A673 (cell line): ENCODE measurements at regions of chr20 and their contacts with region 1.

Region 1: DNA sequence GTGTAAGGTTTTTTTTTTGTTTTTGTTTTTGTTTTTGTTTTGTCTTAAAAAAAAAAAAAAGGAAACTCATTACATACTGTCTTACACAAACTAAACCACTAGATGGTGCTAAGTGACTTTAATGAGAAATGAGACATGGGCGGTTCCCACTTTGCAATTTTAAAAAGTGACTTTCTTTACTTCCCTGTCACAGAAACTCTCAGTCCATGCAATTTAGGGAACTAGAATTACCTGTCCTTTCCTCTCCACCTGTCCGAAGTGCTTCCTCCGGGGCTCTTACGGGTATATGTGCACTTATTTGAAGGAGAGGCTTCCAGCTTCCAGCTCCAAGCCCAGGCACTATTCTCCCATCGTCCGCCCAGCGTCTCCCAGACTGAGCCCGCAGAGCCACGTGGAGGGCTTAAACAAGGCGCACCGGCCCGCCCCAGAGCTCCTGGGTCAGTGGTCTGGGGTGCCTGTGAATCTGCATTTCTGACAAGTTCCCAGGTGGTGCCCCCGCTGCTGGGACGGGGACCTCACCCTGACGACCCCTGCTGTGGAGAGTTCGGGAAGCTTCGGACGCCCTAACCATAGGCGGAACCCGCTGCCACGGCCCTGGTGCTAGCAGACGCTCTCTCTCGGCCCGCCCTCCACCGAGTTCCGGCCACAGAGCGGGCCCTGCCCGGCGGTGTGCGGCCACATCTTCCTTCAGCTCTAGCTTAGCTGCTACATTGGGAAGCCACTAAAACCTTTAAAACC is 26.1 kb downstream of the BFSP1 start:
- DNase-seq: peak; percentile 74
- H3K4me3 ChIP-seq: peak overlapping the region; percentile 32
- H3K27ac ChIP-seq: peak overlapping the region; percentile 4
- H3K4me1 ChIP-seq: peaks cover 12% of the 10 kb centered on the region
- H3K27me3 ChIP-seq: no peaks in the 10 kb centered on the region
- CTCF ChIP-seq: peak; percentile 79

Region 2: GRCh38 chr20:17530716-17531664 is 25.9 kb after region 1 on chr20 and contains the start of gene BFSP1:
- CTCF ChIA-PET with region 1: no interaction called
- POLR2A ChIA-PET with region 1: no interaction called
- intact Hi-C with region 1: loop called (anchors 2 kb)
- DNase-seq: peak; percentile 79
- H3K4me3 ChIP-seq: peak within 1 kb of the TSS; percentile 57
- H3K27ac ChIP-seq: peak within 1 kb of the TSS; percentile 88
- H3K4me1 ChIP-seq: peaks cover 23% of the 10 kb centered on the region
- H3K27me3 ChIP-seq: no peaks in the 10 kb centered on the region
- CTCF ChIP-seq: no peak
- total RNA-seq, gene BFSP1: 6.1 and 7.4 TPM in 2 replicates

Region 3: DNA sequence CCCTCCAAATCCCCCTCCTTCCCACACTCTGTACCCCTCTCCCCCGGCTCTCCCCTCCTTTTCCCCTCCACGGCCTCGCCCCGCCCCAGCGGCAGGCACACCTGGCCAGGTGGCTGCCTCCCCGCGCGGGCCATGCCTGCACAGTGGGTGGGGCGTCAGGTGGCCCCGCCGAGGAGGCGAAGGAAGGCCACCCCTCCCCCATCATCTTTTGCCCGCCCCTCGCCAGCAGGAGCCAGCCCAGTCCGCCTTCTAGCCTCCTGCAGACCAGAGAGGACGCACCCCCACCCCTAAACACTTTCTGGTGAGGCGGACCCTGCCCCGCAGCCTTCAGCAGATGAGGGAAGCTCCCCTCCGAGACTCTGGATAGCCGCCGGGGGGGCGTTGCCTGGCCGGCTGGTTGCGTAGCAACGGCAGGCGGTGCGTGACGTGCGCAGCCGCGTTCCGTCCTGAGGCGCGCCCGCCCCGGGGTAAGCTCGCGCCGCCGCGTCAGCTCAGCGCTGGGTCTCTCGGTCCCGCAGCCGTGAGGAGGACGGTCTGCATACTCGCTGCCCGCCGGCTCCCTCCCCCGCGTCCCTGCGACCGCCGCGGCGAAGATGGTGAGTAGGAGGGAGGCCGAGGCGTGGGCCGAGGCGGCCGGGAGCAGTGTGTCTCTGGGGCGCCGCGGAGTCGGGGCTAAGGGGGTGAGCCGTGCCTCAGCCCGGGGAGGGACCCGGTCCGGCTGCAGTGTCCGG is 64.7 kb after region 1 on chr20 and contains the start of gene DSTN:
- CTCF ChIA-PET with region 1: no interaction called
- POLR2A ChIA-PET with region 1: interaction called, 14 read pairs
- intact Hi-C with region 1: no loop called
- DNase-seq: peak; percentile 95
- H3K4me3 ChIP-seq: peak within 1 kb of the TSS; percentile 86
- H3K27ac ChIP-seq: peak within 1 kb of the TSS; percentile 89
- H3K4me1 ChIP-seq: peaks cover 11% of the 10 kb centered on the region
- H3K27me3 ChIP-seq: no peaks in the 10 kb centered on the region
- CTCF ChIP-seq: no peak
- total RNA-seq, gene DSTN: 148 and 159 TPM in 2 replicates

Region 4: GRCh38 chr20:17617551-17618223 is 112.6 kb after region 1 on chr20:
- CTCF ChIA-PET with region 1: no interaction called
- POLR2A ChIA-PET with region 1: no interaction called
- intact Hi-C with region 1: loop called (anchors 2 kb)
- DNase-seq: peak; percentile 57
- H3K4me3 ChIP-seq: no peak overlapping the region
- H3K27ac ChIP-seq: no peak overlapping the region
- H3K4me1 ChIP-seq: peaks cover 11% of the 10 kb centered on the region
- H3K27me3 ChIP-seq: no peaks in the 10 kb centered on the region
- CTCF ChIP-seq: peak; percentile 68

Region 5: GRCh38 chr20:17898548-17898994 is 393.5 kb after region 1 on chr20:
- CTCF ChIA-PET with region 1: interaction called, 4 read pairs
- POLR2A ChIA-PET with region 1: no interaction called
- intact Hi-C with region 1: loop called (anchors 5 kb)
- DNase-seq: peak; percentile 73
- H3K4me3 ChIP-seq: no peak overlapping the region
- H3K27ac ChIP-seq: no peak overlapping the region
- H3K4me1 ChIP-seq: peaks cover 7% of the 10 kb centered on the region
- H3K27me3 ChIP-seq: no peaks in the 10 kb centered on the region
- CTCF ChIP-seq: peak; percentile 88

Region 6: GRCh38 chr20:17995967-17996819 is 491.1 kb after region 1 on chr20:
- CTCF ChIA-PET with region 1: no interaction called
- POLR2A ChIA-PET with region 1: no interaction called
- intact Hi-C with region 1: loop called (anchors 10 kb)
- DNase-seq: peak; percentile 78
- H3K4me3 ChIP-seq: no peak overlapping the region
- H3K27ac ChIP-seq: no peak overlapping the region
- H3K4me1 ChIP-seq: peaks cover 7% of the 10 kb centered on the region
- H3K27me3 ChIP-seq: no peaks in the 10 kb centered on the region
- CTCF ChIP-seq: peak; percentile 91

Region 7: GRCh38 chr20:18276821-18277220 is 771.8 kb after region 1 on chr20:
- CTCF ChIA-PET with region 1: interaction called, 3 read pairs
- POLR2A ChIA-PET with region 1: no interaction called
- intact Hi-C with region 1: loop called (anchors 5 kb)
- DNase-seq: peak; percentile 75
- H3K4me3 ChIP-seq: no peak overlapping the region
- H3K27ac ChIP-seq: no peak overlapping the region
- H3K4me1 ChIP-seq: no peaks in the 10 kb centered on the region
- H3K27me3 ChIP-seq: peaks cover 45% of the 10 kb centered on the region
- CTCF ChIP-seq: peak; percentile 92